ENCODE measurements at regions of chr18 and their contacts with region 1.

Region 1: GRCh38 chr18:37698508-37699040 is 133.0 kb upstream of the CELF4 start:
- DNase-seq: no peak
- H3K4me3 ChIP-seq: no peak overlapping the region
- H3K27ac ChIP-seq: no peak overlapping the region
- H3K4me1 ChIP-seq: no peaks in the 10 kb centered on the region
- H3K27me3 ChIP-seq: no peaks in the 10 kb centered on the region
- CTCF ChIP-seq: no peak
- POLR2A ChIP-seq: no peak

Region 2: DNA sequence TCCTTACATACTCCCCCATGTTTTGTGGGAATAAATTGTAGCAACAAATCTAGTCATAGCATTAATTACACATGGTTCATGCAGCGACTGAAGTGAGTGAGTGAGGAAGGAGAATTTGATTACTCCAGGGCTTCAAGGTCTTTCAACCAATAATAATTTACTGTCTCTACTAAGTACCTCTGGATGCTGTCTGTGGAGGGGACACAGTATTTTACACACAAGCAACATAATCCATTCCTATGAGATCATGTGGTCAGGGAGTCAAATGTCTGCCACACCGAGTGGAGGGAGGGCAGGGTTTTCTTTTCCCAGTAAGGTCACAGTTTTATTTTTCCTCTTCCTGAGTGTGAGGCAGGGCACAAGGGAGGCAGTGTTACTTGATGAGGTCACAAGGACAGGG is 201.8 kb after region 1 on chr18:
- intact Hi-C with region 1: no loop called
- DNase-seq: no peak
- H3K4me3 ChIP-seq: no peak overlapping the region
- H3K27ac ChIP-seq: no peak overlapping the region
- H3K4me1 ChIP-seq: no peaks in the 10 kb centered on the region
- H3K27me3 ChIP-seq: no peaks in the 10 kb centered on the region
- CTCF ChIP-seq: no peak
- POLR2A ChIP-seq: no peak

Region 3: DNA sequence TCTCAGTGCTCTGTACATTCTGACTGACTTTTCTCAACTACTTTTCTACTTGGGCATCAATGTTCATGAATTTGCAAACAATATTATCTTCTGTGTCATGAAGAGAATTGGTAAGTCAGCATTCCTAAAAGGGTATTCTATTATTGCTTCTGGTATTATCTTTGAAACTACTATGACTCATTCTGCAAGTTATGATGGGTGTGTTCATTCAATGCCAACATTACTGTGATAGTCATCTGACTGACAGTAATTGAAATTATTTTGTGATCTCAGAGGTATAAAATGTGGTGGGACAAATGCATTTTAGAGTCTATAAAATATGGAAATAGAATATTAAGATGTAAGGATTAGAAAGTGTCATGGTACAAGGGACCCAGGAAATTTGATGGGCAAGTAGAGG is 603.0 kb after region 1 on chr18:
- intact Hi-C with region 1: no loop called
- DNase-seq: no peak
- H3K4me3 ChIP-seq: no peak overlapping the region
- H3K27ac ChIP-seq: no peak overlapping the region
- H3K4me1 ChIP-seq: no peaks in the 10 kb centered on the region
- H3K27me3 ChIP-seq: no peaks in the 10 kb centered on the region
- CTCF ChIP-seq: no peak
- POLR2A ChIP-seq: no peak

Region 4: DNA sequence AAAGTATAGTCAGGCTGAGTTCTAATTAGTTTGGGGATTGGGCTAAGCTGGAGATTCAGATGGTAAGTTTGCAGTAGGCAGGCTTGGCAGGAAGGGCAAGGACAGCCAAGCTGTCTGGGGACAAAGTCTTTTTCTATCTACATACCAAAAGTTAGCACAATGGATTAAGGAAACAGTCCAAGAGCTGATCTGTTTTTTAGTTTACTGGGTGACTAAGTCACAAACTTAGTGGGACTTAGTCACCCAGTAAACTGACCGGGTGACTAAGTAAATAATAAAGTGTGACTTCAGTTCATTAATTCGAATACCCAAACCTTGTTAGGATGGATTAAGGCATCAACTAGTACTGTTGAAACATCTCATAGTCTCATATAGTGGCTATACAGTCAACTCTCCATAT is 1253.1 kb after region 1 on chr18:
- intact Hi-C with region 1: loop called (anchors 5 kb)
- DNase-seq: no peak
- H3K4me3 ChIP-seq: no peak overlapping the region
- H3K27ac ChIP-seq: no peak overlapping the region
- H3K4me1 ChIP-seq: no peaks in the 10 kb centered on the region
- H3K27me3 ChIP-seq: no peaks in the 10 kb centered on the region
- CTCF ChIP-seq: no peak
- POLR2A ChIP-seq: no peak

Measured in vagina (tissue), 2 donors.